Esophagus muscularis mucosa (tissue), 4 donors: ENCODE measurements at regions of chr11 and their contacts with region 1.

Region 1: GRCh38 chr11:78416305-78417178 is 1.1 kb downstream of the GAB2 start:
- DNase-seq: peak; percentile 97
- H3K4me3 ChIP-seq: peak overlapping the region; percentile 82 to 100 (median 94)
- H3K27ac ChIP-seq: peak overlapping the region; percentile 96 to 99 (median 99)
- H3K4me1 ChIP-seq: peaks cover 36 to 50% (median 40%) of the 10 kb centered on the region in 4 donors
- H3K27me3 ChIP-seq: no peaks in the 10 kb centered on the region
- CTCF ChIP-seq: peak; percentile 24 to 49 (median 35)
- EP300 ChIP-seq: no peak
- POLR2A ChIP-seq: no peak

Region 2: DNA sequence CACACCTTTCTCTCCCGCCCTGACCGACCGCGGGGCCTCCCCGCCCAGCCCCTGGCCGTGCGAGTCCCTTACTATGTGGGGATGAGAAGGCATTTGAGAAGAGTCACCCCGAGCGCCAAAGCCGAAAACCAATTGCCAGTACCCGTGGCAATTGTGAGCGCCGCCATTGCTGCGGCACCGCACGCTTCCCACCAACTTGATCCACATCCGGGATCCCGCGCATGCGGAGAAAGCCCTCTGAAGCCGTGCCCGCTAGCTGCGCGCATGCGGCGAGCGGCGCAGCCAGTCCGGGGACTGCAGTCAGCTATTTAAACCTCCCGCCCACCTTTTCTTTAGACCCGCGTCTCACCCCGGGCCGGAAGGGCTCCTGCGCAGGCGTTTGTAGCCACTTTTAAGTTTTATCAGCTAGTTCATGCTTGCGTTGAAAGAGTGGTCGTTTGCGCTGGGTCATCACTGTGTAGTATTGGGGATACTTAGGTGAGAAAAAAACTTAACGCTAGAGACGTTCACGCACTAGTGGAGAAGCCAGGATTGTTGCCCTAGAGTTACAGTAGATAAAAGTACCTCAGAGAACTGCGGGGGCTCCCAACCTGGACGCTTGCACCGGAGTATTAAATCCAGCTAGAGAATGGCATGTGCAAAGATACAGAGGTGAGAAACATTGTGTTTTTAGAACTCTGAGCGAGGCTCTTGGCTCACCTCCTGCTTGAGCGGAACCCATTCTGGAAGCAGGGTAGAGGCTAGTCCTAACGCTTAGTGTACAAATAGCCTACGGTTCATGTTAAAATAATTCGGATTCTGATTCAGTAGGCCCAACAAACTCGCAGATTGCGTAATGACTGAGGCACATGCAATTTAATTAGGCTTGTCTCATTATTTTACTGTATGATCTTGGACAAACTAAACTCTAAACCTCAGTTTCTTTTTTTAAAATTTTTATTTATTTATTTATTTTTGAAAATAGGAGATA is 276.8 kb before region 1 on chr11 and contains the start of gene ALG8:
- intact Hi-C with region 1: loop called (anchors 5 kb)
- DNase-seq: peak; percentile 97
- H3K4me3 ChIP-seq: peak within 1 kb of the TSS; percentile 68 to 83 (median 72)
- H3K27ac ChIP-seq: peak within 1 kb of the TSS; percentile 66 to 81 (median 74)
- H3K4me1 ChIP-seq: peaks cover 7 to 22% (median 16%) of the 10 kb centered on the region in 4 donors
- H3K27me3 ChIP-seq: no peaks in the 10 kb centered on the region
- CTCF ChIP-seq: no peak
- EP300 ChIP-seq: no peak
- POLR2A ChIP-seq: no peak
- total RNA-seq, gene ALG8: 11.2 to 21.6 (median 15.7) TPM

Region 3: GRCh38 chr11:78228467-78228866 is 188.1 kb before region 1 on chr11:
- intact Hi-C with region 1: loop called (anchors 5 kb)
- DNase-seq: peak; percentile 70
- H3K4me3 ChIP-seq: no peak overlapping the region
- H3K27ac ChIP-seq: no peak overlapping the region
- H3K4me1 ChIP-seq: peaks cover 14 to 39% (median 32%) of the 10 kb centered on the region in 4 donors
- H3K27me3 ChIP-seq: no peaks in the 10 kb centered on the region
- CTCF ChIP-seq: peak; percentile 50 to 52 (median 51)
- EP300 ChIP-seq: no peak
- POLR2A ChIP-seq: no peak

Region 4: GRCh38 chr11:78310500-78310909 is 106.0 kb before region 1 on chr11:
- intact Hi-C with region 1: loop called (anchors 5 kb)
- DNase-seq: no peak
- H3K4me3 ChIP-seq: peak overlapping the region; percentile 10 to 29 (median 22)
- H3K27ac ChIP-seq: peak overlapping the region; percentile 35 to 64 (median 55)
- H3K4me1 ChIP-seq: peaks cover 37 to 59% (median 53%) of the 10 kb centered on the region in 4 donors
- H3K27me3 ChIP-seq: no peaks in the 10 kb centered on the region
- CTCF ChIP-seq: no peak
- EP300 ChIP-seq: no peak
- POLR2A ChIP-seq: no peak

Region 5: DNA sequence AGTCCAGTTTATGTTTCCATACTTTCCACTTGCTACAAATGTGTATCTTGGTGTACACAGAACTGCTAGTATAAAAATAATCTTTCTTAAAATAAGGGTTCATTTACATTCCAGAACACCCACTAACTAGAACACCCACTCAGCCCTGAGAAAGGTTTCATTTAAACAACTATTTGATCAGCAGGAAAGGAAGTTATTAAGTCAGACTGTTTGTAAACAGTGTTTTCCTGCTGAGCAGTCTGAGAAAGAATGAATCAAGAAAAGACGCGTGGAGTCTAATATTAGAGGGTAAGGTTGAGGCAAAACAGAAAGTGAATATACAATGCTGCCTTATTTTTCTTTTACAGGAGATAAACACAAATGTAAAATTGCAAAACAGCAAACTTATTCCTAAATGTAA is 125.5 kb after region 1 on chr11:
- intact Hi-C with region 1: no loop called
- DNase-seq: no peak
- H3K4me3 ChIP-seq: no peak overlapping the region
- H3K27ac ChIP-seq: no peak overlapping the region
- H3K4me1 ChIP-seq: peaks cover 0 to 5% (median 4%) of the 10 kb centered on the region in 4 donors
- H3K27me3 ChIP-seq: no peaks in the 10 kb centered on the region
- CTCF ChIP-seq: no peak
- EP300 ChIP-seq: no peak
- POLR2A ChIP-seq: no peak